CD14-positive monocyte (primary cell): ENCODE measurements at regions of chrX and their contacts with region 1.

Region 1: GRCh38 chrX:1246816-1247215 is 21.8 kb upstream of the CSF2RA start:
- DNase-seq: peak; percentile 80 to 82 (median 82)
- H3K4me3 ChIP-seq: no peak overlapping the region
- H3K4me3 Mint-ChIP-seq: no peak overlapping the region
- H3K27ac ChIP-seq: no peak overlapping the region
- H3K27ac Mint-ChIP-seq: peak overlapping the region in 6 of 7 donors; percentile 26 to 82 (median 72)
- H3K4me1 ChIP-seq: peaks cover 42 to 43% of the 10 kb centered on the region in 2 donors
- H3K4me1 Mint-ChIP-seq: peaks cover 46% of the 10 kb centered on the region
- H3K27me3 ChIP-seq: peaks cover 0 to 3% of the 10 kb centered on the region in 2 donors
- H3K27me3 Mint-ChIP-seq: peaks cover 2 to 22% (median 17%) of the 10 kb centered on the region in 3 donors
- CTCF ChIP-seq: peak; percentile 83

Region 2: GRCh38 chrX:1274786-1275185 is 28.0 kb after region 1 on chrX:
- intact Hi-C with region 1: loop called in 1 of 2 experiments (anchors 2 kb)
- DNase-seq: peak; percentile 84 to 94 (median 93)
- H3K4me3 ChIP-seq: peak overlapping the region in 1 of 3 experiments; percentile 64
- H3K4me3 Mint-ChIP-seq: peak overlapping the region; percentile 51 to 73
- H3K27ac ChIP-seq: peak overlapping the region; percentile 78
- H3K27ac Mint-ChIP-seq: peak overlapping the region; percentile 92 to 98 (median 97)
- H3K4me1 ChIP-seq: peaks cover 69 to 73% of the 10 kb centered on the region in 2 donors
- H3K4me1 Mint-ChIP-seq: peaks cover 56% of the 10 kb centered on the region
- H3K27me3 ChIP-seq: no peaks in the 10 kb centered on the region
- H3K27me3 Mint-ChIP-seq: no peaks in the 10 kb centered on the region
- CTCF ChIP-seq: no peak

Region 3: GRCh38 chrX:1292575-1293290 is 45.9 kb after region 1 on chrX:
- intact Hi-C with region 1: loop called in 1 of 2 experiments (anchors 5 kb)
- DNase-seq: no peak
- H3K4me3 ChIP-seq: no peak overlapping the region
- H3K4me3 Mint-ChIP-seq: no peak overlapping the region
- H3K27ac ChIP-seq: peak overlapping the region; percentile 24 to 57
- H3K27ac Mint-ChIP-seq: peak overlapping the region; percentile 9 to 80 (median 60)
- H3K4me1 ChIP-seq: peaks cover 0 to 13% of the 10 kb centered on the region in 2 donors
- H3K4me1 Mint-ChIP-seq: peaks cover 20% of the 10 kb centered on the region
- H3K27me3 ChIP-seq: no peaks in the 10 kb centered on the region
- H3K27me3 Mint-ChIP-seq: peaks cover 0 to 2% (median 0%) of the 10 kb centered on the region in 3 donors
- CTCF ChIP-seq: no peak

Region 4: GRCh38 chrX:1380672-1381233 is 133.9 kb after region 1 on chrX:
- intact Hi-C with region 1: loop called in 1 of 2 experiments (anchors 10 kb)
- DNase-seq: no peak
- H3K4me3 ChIP-seq: no peak overlapping the region
- H3K4me3 Mint-ChIP-seq: no peak overlapping the region
- H3K27ac ChIP-seq: no peak overlapping the region
- H3K27ac Mint-ChIP-seq: peak overlapping the region in 2 of 7 donors; percentile 50 to 62
- H3K4me1 ChIP-seq: no peaks in the 10 kb centered on the region
- H3K4me1 Mint-ChIP-seq: peaks cover 11% of the 10 kb centered on the region
- H3K27me3 ChIP-seq: no peaks in the 10 kb centered on the region
- H3K27me3 Mint-ChIP-seq: peaks cover 0 to 3% (median 2%) of the 10 kb centered on the region in 3 donors
- CTCF ChIP-seq: no peak